ENCODE measurements at regions of chr5 and their contacts with region 1.

Region 1: GRCh38 chr5:137629646-137630045 is 106.2 kb downstream of the KLHL3 start:
- DNase-seq: peak in 7 of 9 donors; percentile 26 to 61 (median 52)
- ATAC-seq: peak; percentile 82
- H3K4me3 ChIP-seq: no peak overlapping the region
- H3K4me3 Mint-ChIP-seq: no peak overlapping the region
- H3K27ac ChIP-seq: no peak overlapping the region
- H3K27ac Mint-ChIP-seq: no peak overlapping the region
- H3K4me1 ChIP-seq: no peaks in the 10 kb centered on the region
- H3K4me1 Mint-ChIP-seq: peaks cover 0 to 2% (median 0%) of the 10 kb centered on the region in 7 donors
- H3K27me3 ChIP-seq: no peaks in the 10 kb centered on the region
- H3K27me3 Mint-ChIP-seq: no peaks in the 10 kb centered on the region

Region 2: GRCh38 chr5:137061382-137061781 is 568.3 kb before region 1 on chr5:
- CTCF ChIA-PET with region 1: no interaction called
- POLR2A ChIA-PET with region 1: no interaction called
- intact Hi-C with region 1: no loop called
- DNase-seq: no peak
- ATAC-seq: no peak
- H3K4me3 ChIP-seq: no peak overlapping the region
- H3K4me3 Mint-ChIP-seq: no peak overlapping the region
- H3K27ac ChIP-seq: no peak overlapping the region
- H3K27ac Mint-ChIP-seq: no peak overlapping the region
- H3K4me1 ChIP-seq: no peaks in the 10 kb centered on the region
- H3K4me1 Mint-ChIP-seq: no peaks in the 10 kb centered on the region
- H3K27me3 ChIP-seq: no peaks in the 10 kb centered on the region
- H3K27me3 Mint-ChIP-seq: peaks cover 0 to 10% (median 8%) of the 10 kb centered on the region in 5 donors

Region 3: DNA sequence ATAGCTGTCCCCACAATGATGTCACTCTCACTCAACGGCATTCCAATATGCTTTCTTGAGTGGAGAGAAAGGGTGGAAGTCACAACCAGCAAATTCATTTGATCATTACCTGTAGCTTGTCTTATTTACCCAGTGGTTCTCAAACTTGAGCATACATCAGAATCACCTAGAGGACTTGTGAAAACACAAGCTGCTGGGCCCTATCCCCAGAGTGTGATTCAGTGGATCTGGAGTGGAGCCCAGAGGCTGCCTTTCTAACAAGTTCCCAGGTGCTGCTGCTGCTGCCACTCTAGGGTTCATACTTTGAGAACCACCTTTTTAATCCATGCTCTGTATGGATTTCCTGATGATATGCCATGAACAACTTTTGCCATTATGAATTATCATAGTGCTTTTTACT is 11.5 kb after region 1 on chr5:
- CTCF ChIA-PET with region 1: interaction called, 11 read pairs
- POLR2A ChIA-PET with region 1: no interaction called
- intact Hi-C with region 1: no loop called
- DNase-seq: no peak
- ATAC-seq: no peak
- H3K4me3 ChIP-seq: no peak overlapping the region
- H3K4me3 Mint-ChIP-seq: no peak overlapping the region
- H3K27ac ChIP-seq: no peak overlapping the region
- H3K27ac Mint-ChIP-seq: peak overlapping the region in 1 of 9 donors; percentile 10
- H3K4me1 ChIP-seq: no peaks in the 10 kb centered on the region
- H3K4me1 Mint-ChIP-seq: peaks cover 0 to 1% (median 0%) of the 10 kb centered on the region in 7 donors
- H3K27me3 ChIP-seq: no peaks in the 10 kb centered on the region
- H3K27me3 Mint-ChIP-seq: no peaks in the 10 kb centered on the region

Region 4: DNA sequence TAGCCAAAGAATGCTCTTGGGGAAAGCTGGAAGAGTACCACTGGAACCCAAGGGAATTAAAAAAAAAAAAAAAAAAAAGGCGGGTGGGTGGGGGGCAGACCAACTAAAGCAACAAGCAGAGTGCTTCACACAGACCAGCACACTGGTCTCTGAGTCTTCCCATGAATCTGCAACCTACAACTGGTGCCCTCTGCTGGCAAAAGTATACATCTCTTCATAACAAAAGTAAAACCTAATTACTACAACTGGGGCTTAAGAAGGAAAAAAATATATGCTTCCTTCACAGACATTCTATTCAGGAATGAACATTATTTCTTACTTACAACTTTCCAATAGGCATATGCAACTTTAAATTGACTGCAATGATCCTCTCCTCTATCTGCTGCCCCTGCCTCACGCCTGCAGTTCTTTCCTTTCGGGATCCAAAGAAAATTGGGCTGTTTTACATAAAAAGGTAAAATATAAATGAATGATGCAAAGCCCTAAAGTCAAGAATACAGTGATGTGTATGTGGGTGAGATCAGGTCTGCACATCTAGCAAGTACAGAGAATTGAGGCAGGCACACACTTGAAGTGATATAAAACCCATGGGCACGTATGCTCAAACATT is 113.5 kb after region 1 on chr5:
- CTCF ChIA-PET with region 1: interaction called, 33 read pairs
- POLR2A ChIA-PET with region 1: no interaction called
- intact Hi-C with region 1: loop called (anchors 1 kb)
- DNase-seq: peak in 8 of 9 donors; percentile 34 to 77 (median 72)
- ATAC-seq: peak; percentile 93
- H3K4me3 ChIP-seq: no peak overlapping the region
- H3K4me3 Mint-ChIP-seq: peak overlapping the region in 1 of 10 donors; percentile 54
- H3K27ac ChIP-seq: no peak overlapping the region
- H3K27ac Mint-ChIP-seq: peak overlapping the region in 2 of 9 donors; percentile 64 to 70
- H3K4me1 ChIP-seq: peaks cover 1 to 12% of the 10 kb centered on the region in 2 donors
- H3K4me1 Mint-ChIP-seq: peaks cover 5 to 32% (median 12%) of the 10 kb centered on the region in 7 donors
- H3K27me3 ChIP-seq: no peaks in the 10 kb centered on the region
- H3K27me3 Mint-ChIP-seq: peaks cover 0 to 3% (median 0%) of the 10 kb centered on the region in 5 donors

Region 5: GRCh38 chr5:137822158-137822764 is 192.6 kb after region 1 on chr5:
- CTCF ChIA-PET with region 1: no interaction called
- POLR2A ChIA-PET with region 1: no interaction called
- intact Hi-C with region 1: loop called in 1 of 2 experiments (anchors 1 kb)
- DNase-seq: no peak
- ATAC-seq: no peak
- H3K4me3 ChIP-seq: no peak overlapping the region
- H3K4me3 Mint-ChIP-seq: no peak overlapping the region
- H3K27ac ChIP-seq: no peak overlapping the region
- H3K27ac Mint-ChIP-seq: no peak overlapping the region
- H3K4me1 ChIP-seq: no peaks in the 10 kb centered on the region
- H3K4me1 Mint-ChIP-seq: no peaks in the 10 kb centered on the region
- H3K27me3 ChIP-seq: no peaks in the 10 kb centered on the region
- H3K27me3 Mint-ChIP-seq: peaks cover 0 to 6% (median 0%) of the 10 kb centered on the region in 5 donors

Region 6: GRCh38 chr5:138128334-138128733 is 498.7 kb after region 1 on chr5:
- CTCF ChIA-PET with region 1: interaction called, 5 read pairs
- POLR2A ChIA-PET with region 1: no interaction called
- intact Hi-C with region 1: loop called (anchors 1 kb)
- DNase-seq: no peak
- ATAC-seq: no peak
- H3K4me3 ChIP-seq: no peak overlapping the region
- H3K4me3 Mint-ChIP-seq: no peak overlapping the region
- H3K27ac ChIP-seq: no peak overlapping the region
- H3K27ac Mint-ChIP-seq: no peak overlapping the region
- H3K4me1 ChIP-seq: no peaks in the 10 kb centered on the region
- H3K4me1 Mint-ChIP-seq: peaks cover 0 to 2% (median 0%) of the 10 kb centered on the region in 7 donors
- H3K27me3 ChIP-seq: no peaks in the 10 kb centered on the region
- H3K27me3 Mint-ChIP-seq: peaks cover 0 to 22% (median 4%) of the 10 kb centered on the region in 5 donors

Measured in naive thymus-derived CD4-positive, alpha-beta T cell (primary cell).